ENCODE measurements at regions of chrX and their contacts with region 1.

Region 1: GRCh38 chrX:135543924-135544323 is 23.5 kb downstream of the INTS6L start:
- DNase-seq: peak in 3 of 5 donors; percentile 9 to 38 (median 16)
- H3K4me3 ChIP-seq: no peak overlapping the region
- H3K4me3 Mint-ChIP-seq: no peak overlapping the region
- H3K27ac ChIP-seq: no peak overlapping the region
- H3K27ac Mint-ChIP-seq: no peak overlapping the region
- H3K4me1 ChIP-seq: peaks cover 28% of the 10 kb centered on the region
- H3K4me1 Mint-ChIP-seq: peaks cover 19 to 44% (median 26%) of the 10 kb centered on the region in 4 donors
- H3K27me3 ChIP-seq: no peaks in the 10 kb centered on the region
- H3K27me3 Mint-ChIP-seq: no peaks in the 10 kb centered on the region

Region 2: GRCh38 chrX:135572436-135572835 is 28.5 kb after region 1 on chrX:
- CTCF ChIA-PET with region 1: interaction called, 10 read pairs
- POLR2A ChIA-PET with region 1: no interaction called
- intact Hi-C with region 1: no loop called
- DNase-seq: peak in 1 of 5 donors; percentile 3
- H3K4me3 ChIP-seq: no peak overlapping the region
- H3K4me3 Mint-ChIP-seq: no peak overlapping the region
- H3K27ac ChIP-seq: no peak overlapping the region
- H3K27ac Mint-ChIP-seq: peak overlapping the region in 1 of 7 donors; percentile 23
- H3K4me1 ChIP-seq: no peaks in the 10 kb centered on the region
- H3K4me1 Mint-ChIP-seq: no peaks in the 10 kb centered on the region
- H3K27me3 ChIP-seq: no peaks in the 10 kb centered on the region
- H3K27me3 Mint-ChIP-seq: no peaks in the 10 kb centered on the region